AG04450 (cell line): ENCODE measurements at regions of chr17 and their contacts with region 1.

Region 1: DNA sequence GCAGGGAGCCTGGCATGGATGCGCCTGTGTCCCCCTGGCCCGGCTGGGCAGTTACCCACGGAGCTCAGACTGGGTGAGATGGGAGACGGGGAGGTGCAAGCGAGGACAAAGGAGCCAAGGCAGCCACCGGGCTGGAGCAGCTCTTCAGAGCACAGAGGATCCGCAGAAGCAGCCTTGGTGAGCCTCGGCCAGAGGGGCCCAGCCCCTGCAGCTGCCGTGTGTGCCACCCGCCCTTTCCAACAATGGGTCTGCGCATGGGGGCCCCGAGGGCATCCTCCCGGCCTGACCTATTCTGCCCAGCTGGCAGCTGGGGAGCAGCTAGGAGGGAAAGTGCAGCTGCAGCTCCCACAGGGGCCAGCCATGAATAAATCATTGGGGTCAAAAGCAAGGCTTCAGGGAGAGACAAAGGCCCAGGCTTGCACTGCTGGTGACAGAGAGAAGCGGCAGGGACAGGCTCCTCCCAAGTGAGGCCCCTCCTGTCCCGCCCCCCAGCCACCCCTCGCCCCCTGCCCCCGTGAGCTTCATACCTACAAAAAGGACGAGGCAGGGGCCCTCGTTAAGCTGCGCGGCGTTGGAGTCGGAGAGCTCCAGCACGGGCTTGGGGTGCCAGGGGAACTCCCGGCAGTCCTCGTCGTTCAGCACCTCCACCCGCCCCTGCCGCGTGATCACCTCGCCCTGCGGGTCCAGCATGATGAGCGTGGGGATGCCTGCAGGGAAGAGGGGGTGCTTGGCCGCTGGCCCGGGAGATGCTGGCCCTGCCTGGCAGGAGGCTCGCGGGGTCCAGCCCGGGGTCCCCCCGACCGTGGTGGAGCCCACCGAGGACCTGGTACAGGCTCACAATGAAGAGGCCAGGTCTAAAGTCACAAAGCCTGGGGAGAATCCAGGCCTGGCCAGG is 22.6 kb downstream of the MRM3 start:
- DNase-seq: no peak
- H3K4me3 ChIP-seq: no peak overlapping the region
- H3K27ac ChIP-seq: no peak overlapping the region
- H3K27me3 ChIP-seq: no peaks in the 10 kb centered on the region
- CTCF ChIP-seq: no peak

Region 2: GRCh38 chr17:823501-823902 is 18.7 kb after region 1 on chr17:
- CTCF ChIA-PET with region 1: no interaction called
- POLR2A ChIA-PET with region 1: no interaction called
- DNase-seq: no peak
- H3K4me3 ChIP-seq: no peak overlapping the region
- H3K27ac ChIP-seq: no peak overlapping the region
- H3K27me3 ChIP-seq: no peaks in the 10 kb centered on the region
- CTCF ChIP-seq: no peak

Region 3: GRCh38 chr17:835263-835662 is 30.5 kb after region 1 on chr17:
- CTCF ChIA-PET with region 1: no interaction called
- POLR2A ChIA-PET with region 1: no interaction called
- DNase-seq: peak; percentile 90
- H3K4me3 ChIP-seq: no peak overlapping the region
- H3K27ac ChIP-seq: peak overlapping the region; percentile 75
- H3K27me3 ChIP-seq: no peaks in the 10 kb centered on the region
- CTCF ChIP-seq: no peak

Region 4: GRCh38 chr17:850851-851763 is 46.3 kb after region 1 on chr17:
- CTCF ChIA-PET with region 1: interaction called, 10 read pairs
- POLR2A ChIA-PET with region 1: no interaction called
- DNase-seq: no peak
- H3K4me3 ChIP-seq: 0 out of 2 replicates have a peak overlapping the region, but pooled peaks have one; percentile 2
- H3K27ac ChIP-seq: peak overlapping the region; percentile 68
- H3K27me3 ChIP-seq: no peaks in the 10 kb centered on the region
- CTCF ChIP-seq: no peak